ENCODE measurements at regions of chr15 and their contacts with region 1.

Region 1: GRCh38 chr15:82849556-82850512 is 40.4 kb downstream of the WHAMM start:
- DNase-seq: peak; percentile 86

Region 2: DNA sequence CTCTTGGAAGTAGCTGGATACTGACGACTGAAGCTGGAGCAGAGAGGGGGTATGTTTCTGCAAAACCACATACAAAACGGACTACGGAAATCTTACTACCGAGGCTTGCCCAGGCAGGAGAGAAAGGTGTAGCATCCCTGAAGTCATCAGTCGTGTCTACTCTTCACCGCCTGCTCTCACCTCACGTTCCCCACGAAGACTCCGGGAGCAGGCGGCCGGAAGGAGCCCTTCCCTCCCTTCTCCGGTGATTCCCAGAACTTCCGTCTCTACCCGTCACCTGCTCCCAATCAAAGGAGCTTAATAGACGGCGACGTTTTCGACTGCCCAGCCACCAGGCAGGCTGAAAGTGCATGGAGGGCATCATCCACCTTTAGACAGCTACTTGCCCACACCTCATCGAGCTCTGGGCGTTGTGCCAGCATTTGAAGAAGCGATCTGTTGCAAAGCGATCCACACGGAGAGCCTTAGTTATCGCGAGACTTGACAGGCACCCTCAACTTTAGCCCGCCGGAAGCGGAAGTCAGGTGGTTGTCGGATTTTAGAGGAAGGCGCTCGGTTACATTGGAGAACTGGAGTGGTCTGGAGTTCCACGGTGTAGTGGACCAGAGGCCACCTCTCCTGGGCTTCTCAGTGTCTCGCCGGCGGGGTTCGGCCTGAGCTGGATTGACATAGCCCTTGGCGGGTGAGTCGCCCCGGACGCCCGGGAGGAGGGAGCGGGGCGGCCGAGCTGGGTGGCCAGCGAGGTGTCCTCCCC is 136.0 kb after region 1 on chr15 and contains the start of gene RAMAC:
- intact Hi-C with region 1: loop called (anchors 5 kb)
- DNase-seq: peak; percentile 96
- total RNA-seq, gene RAMAC: 12.5 TPM

Region 3: DNA sequence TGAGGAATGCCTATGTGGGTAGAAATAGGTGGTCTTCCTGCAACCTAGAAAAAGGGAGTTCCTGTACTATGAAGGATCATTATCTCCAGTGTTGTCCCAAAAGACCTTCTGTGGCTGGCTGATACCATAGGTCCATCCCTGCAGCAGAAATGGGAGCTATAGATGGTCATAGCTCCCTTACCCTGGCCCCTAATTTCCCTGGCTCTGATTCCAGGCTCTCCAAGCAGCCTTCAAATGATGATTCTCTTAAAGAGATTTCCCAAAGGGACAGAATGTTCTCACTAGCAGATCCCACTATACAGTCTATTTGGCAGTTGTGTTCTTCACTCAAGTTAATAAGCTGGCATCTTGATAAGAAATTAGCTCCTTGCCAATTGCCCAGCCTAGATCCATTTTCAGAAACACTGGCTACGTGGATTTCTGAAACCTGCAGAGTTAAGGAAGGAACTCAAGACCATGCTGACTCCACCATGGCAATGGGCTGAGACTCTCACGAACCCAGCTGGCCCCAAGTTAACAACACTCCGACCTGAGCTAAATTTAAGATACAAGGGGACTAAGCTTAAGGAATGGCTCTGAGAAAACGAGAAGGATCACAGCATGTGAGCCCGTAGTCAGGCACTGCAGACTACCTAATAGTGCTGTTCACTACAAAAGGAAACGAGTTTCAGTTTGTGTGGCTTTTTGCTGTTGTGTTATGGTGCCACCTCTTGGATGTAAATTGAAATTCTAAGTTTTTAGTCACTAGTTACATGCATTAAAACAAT is 150.3 kb after region 1 on chr15:
- intact Hi-C with region 1: loop called (anchors 2 kb)
- DNase-seq: no peak

Region 4: GRCh38 chr15:83339396-83339795 is 489.6 kb after region 1 on chr15:
- intact Hi-C with region 1: no loop called
- DNase-seq: no peak

Measured in cardiac septum (tissue), 1 donor.